ENCODE measurements at regions of chr20 and their contacts with region 1.

Region 1: DNA sequence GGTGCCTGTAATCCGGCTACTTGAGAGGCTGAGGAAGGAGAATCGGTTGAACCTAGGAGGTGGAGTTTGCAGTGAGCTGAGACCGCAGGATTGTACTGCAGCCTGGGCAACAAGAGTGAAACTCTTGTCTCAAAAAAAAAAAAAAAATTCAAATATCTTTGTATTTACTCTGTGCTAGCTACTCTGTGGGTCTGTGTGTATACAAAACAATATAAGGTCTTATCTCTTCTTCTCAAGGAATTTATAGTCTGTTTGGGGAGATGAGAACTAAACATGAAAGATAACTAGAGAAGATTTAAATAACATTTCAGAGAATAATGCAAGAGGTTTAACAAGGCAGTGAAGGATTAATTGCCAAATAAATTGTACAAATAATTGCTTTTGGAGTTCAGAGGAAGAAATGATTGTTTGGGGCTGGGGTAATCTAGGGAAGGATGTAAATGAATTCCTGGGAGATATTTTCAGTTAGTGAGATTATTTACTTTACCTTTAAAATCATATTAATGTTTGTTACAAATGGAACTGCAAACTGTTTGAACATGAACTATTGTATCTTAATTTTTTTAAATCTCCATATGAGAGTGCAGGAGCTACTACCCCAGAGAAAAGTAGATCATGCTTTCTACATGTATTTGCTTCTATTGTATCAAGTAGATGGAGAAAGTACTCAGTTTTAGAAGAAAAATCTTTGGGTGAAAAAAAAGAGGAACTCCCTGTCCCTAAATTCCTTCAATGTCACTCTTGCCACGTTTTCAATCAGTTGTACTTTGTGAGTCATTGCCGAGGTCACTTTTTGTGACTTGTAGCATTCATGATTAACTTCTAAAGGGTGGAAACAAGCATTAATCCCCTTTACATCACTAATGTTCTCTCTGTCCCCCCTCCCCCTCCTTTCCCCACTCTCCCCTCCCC is 39.0 kb downstream of the NCOA3 start:
- DNase-seq: peak in 1 of 2 experiments; percentile 57
- H3K4me3 ChIP-seq: no peak overlapping the region
- H3K4me3 Mint-ChIP-seq: no peak overlapping the region
- H3K27ac Mint-ChIP-seq: peak overlapping the region; percentile 20
- H3K4me1 ChIP-seq: peaks cover 31% of the 10 kb centered on the region
- H3K4me1 Mint-ChIP-seq: peaks cover 28% of the 10 kb centered on the region
- H3K27me3 ChIP-seq: no peaks in the 10 kb centered on the region
- H3K27me3 Mint-ChIP-seq: no peaks in the 10 kb centered on the region
- CTCF ChIP-seq: no peak

Region 2: DNA sequence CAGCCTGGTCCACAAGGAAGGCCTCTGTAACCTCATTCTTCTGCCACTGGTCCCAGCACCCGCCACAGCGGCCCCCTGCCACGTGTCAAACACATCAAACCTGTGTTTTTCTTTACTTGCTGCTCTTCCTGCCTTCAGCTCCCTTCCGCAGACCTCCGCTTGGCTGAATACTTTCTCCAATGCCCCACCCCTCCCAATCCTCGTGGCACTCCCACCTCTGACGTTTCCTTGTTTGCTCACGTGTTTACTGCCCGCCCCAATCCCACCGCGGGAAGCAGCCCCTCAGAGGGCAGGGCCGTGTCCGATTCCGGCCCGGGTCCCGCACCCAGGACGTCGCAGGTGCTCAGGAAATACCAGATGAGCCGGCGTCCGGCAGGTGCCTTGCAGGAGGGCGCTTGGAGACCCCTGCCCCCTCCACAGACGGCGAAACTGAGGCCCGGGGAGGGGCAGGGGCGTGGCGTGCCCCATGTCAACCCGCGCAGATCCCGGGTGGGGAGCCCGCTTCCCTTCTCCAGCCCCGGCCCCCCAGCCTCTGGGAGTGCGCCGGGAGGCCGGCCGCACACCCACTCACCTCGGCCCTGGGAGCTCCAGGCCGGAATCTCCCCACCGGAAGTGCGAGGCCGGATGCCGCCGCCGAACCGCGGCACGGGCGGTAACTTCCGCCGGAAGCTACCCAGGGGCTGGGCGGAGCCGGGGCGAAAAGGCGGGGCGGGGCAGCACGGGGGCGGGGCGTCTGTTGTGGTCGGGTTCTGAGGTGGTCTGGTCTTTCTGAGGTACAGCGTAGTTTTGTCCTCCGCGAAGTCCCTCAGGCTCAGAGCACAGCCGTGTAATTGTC is 1176.7 kb before region 1 on chr20:
- CTCF ChIA-PET with region 1: no interaction called
- POLR2A ChIA-PET with region 1: interaction called, 10 read pairs
- intact Hi-C with region 1: no loop called
- DNase-seq: peak; percentile 97 to 98
- H3K4me3 ChIP-seq: peak overlapping the region; percentile 86
- H3K4me3 Mint-ChIP-seq: peak overlapping the region; percentile 88
- H3K27ac Mint-ChIP-seq: peak overlapping the region; percentile 83
- H3K4me1 ChIP-seq: peaks cover 11% of the 10 kb centered on the region
- H3K4me1 Mint-ChIP-seq: peaks cover 14% of the 10 kb centered on the region
- H3K27me3 ChIP-seq: no peaks in the 10 kb centered on the region
- H3K27me3 Mint-ChIP-seq: no peaks in the 10 kb centered on the region
- CTCF ChIP-seq: no peak

Region 3: GRCh38 chr20:47551841-47552240 is 11.1 kb after region 1 on chr20:
- CTCF ChIA-PET with region 1: interaction called, 10 read pairs
- POLR2A ChIA-PET with region 1: no interaction called
- intact Hi-C with region 1: no loop called
- DNase-seq: no peak
- H3K4me3 ChIP-seq: no peak overlapping the region
- H3K4me3 Mint-ChIP-seq: no peak overlapping the region
- H3K27ac Mint-ChIP-seq: no peak overlapping the region
- H3K4me1 ChIP-seq: peaks cover 13% of the 10 kb centered on the region
- H3K4me1 Mint-ChIP-seq: peaks cover 11% of the 10 kb centered on the region
- H3K27me3 ChIP-seq: no peaks in the 10 kb centered on the region
- H3K27me3 Mint-ChIP-seq: no peaks in the 10 kb centered on the region
- CTCF ChIP-seq: no peak

Region 4: GRCh38 chr20:47576516-47577033 is 35.9 kb after region 1 on chr20:
- CTCF ChIA-PET with region 1: interaction called, 3 read pairs
- POLR2A ChIA-PET with region 1: no interaction called
- intact Hi-C with region 1: loop called (anchors 2 kb)
- DNase-seq: peak; percentile 88 to 93
- H3K4me3 ChIP-seq: peak overlapping the region; percentile 8
- H3K4me3 Mint-ChIP-seq: peak overlapping the region; percentile 53
- H3K27ac Mint-ChIP-seq: peak overlapping the region; percentile 11
- H3K4me1 ChIP-seq: peaks cover 39% of the 10 kb centered on the region
- H3K4me1 Mint-ChIP-seq: peaks cover 43% of the 10 kb centered on the region
- H3K27me3 ChIP-seq: no peaks in the 10 kb centered on the region
- H3K27me3 Mint-ChIP-seq: no peaks in the 10 kb centered on the region
- CTCF ChIP-seq: peak in 1 of 2 experiments; percentile 4

Measured in Caco-2 (cell line).